Endothelial cell of umbilical vein (primary cell): ENCODE measurements at regions of chr6 and their contacts with region 1.

Region 1: DNA sequence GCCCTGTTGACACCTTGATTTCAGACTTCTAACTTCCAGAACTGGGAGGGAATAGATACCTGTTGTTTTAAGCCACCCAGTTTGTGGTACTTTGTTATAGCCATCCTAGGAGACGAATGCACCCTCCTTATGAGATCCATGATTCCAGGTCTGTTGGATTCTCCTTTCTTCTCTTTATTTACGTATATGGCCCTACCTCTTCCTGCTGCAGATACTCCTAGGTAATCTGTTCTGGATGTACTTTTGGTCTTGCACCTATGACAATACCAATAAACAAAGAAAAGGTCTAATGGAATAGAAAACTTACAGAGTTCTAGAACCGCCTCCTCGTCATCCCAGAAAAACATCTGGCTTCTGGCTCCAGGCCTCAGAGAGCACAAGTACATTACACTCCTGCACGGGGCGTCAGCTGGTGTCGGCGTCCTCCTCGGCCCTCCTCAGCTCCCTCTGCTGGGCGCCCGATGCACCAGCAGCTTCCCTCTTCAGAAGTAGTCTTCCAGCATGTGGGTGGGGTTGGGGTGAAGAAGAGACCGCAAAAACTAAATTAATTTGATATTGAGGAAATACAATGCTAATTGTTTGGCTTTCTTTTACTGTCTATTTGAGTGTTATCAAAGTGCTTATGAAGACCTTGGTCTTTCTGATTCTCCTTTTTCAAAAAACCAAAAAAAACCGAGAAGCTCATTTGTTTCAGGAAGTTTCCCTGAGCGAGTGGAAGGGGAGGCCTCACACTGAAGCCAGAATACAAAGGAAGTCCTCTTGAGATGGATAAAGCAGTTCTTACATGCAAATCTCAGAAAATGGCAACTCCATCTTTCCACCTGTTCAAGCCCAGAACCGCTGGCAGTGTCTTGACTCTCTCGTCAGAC is 9.7 kb upstream of the ATXN1 start:
- DNase-seq: peak; percentile 76
- H3K4me3 ChIP-seq: no peak overlapping the region
- H3K27ac ChIP-seq: peak overlapping the region; percentile 84
- H3K4me1 ChIP-seq: peaks cover 39% of the 10 kb centered on the region
- H3K27me3 ChIP-seq: no peaks in the 10 kb centered on the region
- CTCF ChIP-seq: peak; percentile 93 to 94
- POLR2A ChIP-seq: no peak

Region 2: GRCh38 chr6:16216501-16217155 is 554.3 kb before region 1 on chr6:
- CTCF ChIA-PET with region 1: no interaction called
- POLR2A ChIA-PET with region 1: no interaction called
- dilution Hi-C with region 1: no loop called
- intact Hi-C with region 1: loop called (anchors 5 kb)
- DNase-seq: peak; percentile 41
- H3K4me3 ChIP-seq: no peak overlapping the region
- H3K27ac ChIP-seq: peak overlapping the region; percentile 99
- H3K4me1 ChIP-seq: peaks cover 28% of the 10 kb centered on the region
- H3K27me3 ChIP-seq: no peaks in the 10 kb centered on the region
- CTCF ChIP-seq: no peak
- POLR2A ChIP-seq: no peak

Region 3: DNA sequence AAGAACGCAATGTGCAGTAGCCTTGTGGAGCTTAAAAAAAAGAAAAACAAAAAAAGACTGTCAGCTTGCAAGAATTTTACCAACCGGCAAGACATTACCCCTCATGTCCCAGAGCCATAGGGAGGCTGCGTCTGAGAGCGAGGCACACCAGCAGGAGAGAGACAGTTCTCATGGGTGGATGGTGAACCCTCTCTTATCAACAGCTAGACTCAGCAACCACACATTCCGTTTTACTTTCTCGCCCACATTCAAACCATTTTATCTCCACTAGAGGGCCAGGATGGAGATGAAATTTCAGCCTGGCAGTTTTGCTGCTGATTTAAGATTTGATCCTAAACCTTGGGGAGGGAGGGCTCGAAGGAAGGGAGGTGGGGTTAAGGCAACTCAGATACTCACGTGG is 256.7 kb before region 1 on chr6:
- CTCF ChIA-PET with region 1: interaction called, 93 read pairs
- POLR2A ChIA-PET with region 1: no interaction called
- dilution Hi-C with region 1: no loop called
- intact Hi-C with region 1: loop called (anchors 1 kb)
- DNase-seq: peak; percentile 60
- H3K4me3 ChIP-seq: no peak overlapping the region
- H3K27ac ChIP-seq: no peak overlapping the region
- H3K4me1 ChIP-seq: peaks cover 6% of the 10 kb centered on the region
- H3K27me3 ChIP-seq: no peaks in the 10 kb centered on the region
- CTCF ChIP-seq: peak; percentile 36 to 55
- POLR2A ChIP-seq: no peak

Region 4: DNA sequence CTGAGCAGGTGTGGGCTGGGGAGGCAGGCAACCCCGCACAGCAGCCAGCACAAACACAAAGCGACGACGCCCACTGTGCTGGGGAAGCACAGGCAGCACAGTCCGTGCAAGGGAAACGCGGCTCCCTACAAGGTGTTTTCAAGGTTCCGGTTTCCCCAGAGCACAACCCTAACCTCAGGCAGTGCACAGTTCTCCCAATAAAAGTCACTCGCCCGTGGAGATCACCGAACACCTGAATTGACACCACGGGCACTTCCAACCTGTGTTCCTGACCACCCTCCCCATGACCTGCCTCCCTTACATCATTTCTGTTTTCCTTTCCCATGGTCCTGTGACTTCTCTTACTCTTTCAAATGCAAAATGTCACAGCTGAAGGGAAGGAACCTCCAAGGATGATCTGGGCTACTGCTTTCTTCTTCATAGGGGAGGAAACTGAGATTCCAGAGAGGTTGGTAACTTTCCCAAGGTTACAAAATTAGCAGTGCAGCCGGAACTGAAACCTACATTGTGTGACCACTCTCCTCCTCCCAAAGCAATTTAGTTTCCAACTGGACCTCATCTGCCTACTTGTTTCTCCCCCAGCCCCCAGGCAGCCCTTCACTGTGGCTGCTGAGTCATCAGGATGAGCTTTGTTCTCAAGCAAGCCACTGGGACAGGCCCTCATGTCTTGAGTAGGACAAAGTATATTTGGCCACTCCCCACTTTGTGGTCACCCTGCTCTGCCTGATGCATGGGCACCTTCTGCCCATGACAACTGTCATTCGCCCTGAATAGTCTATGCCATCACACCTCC is 134.9 kb before region 1 on chr6:
- CTCF ChIA-PET with region 1: no interaction called
- POLR2A ChIA-PET with region 1: no interaction called
- dilution Hi-C with region 1: no loop called
- intact Hi-C with region 1: no loop called
- DNase-seq: no peak
- H3K4me3 ChIP-seq: no peak overlapping the region
- H3K27ac ChIP-seq: no peak overlapping the region
- H3K4me1 ChIP-seq: peaks cover 9% of the 10 kb centered on the region
- H3K27me3 ChIP-seq: no peaks in the 10 kb centered on the region
- CTCF ChIP-seq: no peak
- POLR2A ChIP-seq: no peak

Region 5: GRCh38 chr6:16964553-16965501 is 193.9 kb after region 1 on chr6:
- CTCF ChIA-PET with region 1: interaction called, 22 read pairs
- POLR2A ChIA-PET with region 1: no interaction called
- dilution Hi-C with region 1: no loop called
- intact Hi-C with region 1: no loop called
- DNase-seq: peak; percentile 66
- H3K4me3 ChIP-seq: no peak overlapping the region
- H3K27ac ChIP-seq: no peak overlapping the region
- H3K4me1 ChIP-seq: peaks cover 11% of the 10 kb centered on the region
- H3K27me3 ChIP-seq: peaks cover 0 to 2% of the 10 kb centered on the region in 2 experiments
- CTCF ChIP-seq: peak; percentile 94 to 97
- POLR2A ChIP-seq: no peak

Region 6: DNA sequence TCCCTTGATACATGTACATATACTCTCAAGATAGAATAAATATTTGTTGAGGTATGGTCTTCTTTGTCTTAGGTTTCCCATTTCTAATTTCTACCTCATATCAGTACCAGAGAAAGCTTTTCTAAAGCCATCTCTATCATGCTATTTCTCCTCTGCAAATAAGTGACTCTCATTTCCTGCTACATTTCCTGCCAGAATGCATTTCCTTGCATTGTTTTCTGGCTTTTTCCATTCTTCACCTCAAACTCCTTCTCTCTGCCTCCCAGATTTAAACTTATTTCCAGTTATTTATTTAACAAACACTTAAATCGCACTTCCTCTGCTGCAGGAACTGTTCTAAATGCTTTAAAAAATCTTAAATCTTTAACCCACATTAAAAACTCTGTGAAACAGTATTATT is 256.5 kb after region 1 on chr6:
- CTCF ChIA-PET with region 1: interaction called, 6 read pairs
- POLR2A ChIA-PET with region 1: no interaction called
- dilution Hi-C with region 1: no loop called
- intact Hi-C with region 1: loop called (anchors 5 kb)
- DNase-seq: peak; percentile 66
- H3K4me3 ChIP-seq: peak overlapping the region in 1 of 3 experiments; percentile 11
- H3K27ac ChIP-seq: peak overlapping the region; percentile 53
- H3K4me1 ChIP-seq: peaks cover 19% of the 10 kb centered on the region
- H3K27me3 ChIP-seq: no peaks in the 10 kb centered on the region
- CTCF ChIP-seq: no peak
- POLR2A ChIP-seq: no peak

Region 7: DNA sequence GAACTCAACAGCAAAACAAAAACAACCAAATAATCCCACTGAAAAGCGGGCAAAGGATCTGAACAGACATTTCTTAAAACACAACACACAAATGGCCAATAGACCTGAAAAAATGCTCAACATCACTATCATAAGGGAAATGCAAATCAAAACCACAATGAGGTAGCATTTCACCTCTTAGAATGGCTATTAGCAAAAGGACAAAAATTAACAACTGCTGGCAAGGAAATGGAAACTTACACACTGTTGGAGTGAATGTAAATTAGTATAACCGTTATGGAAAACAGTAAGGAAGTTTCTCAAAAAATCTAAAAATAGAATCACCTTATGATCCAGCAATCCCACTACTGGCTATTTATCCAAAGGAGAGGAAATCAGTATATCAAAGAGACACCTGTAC is 850.1 kb after region 1 on chr6:
- CTCF ChIA-PET with region 1: no interaction called
- POLR2A ChIA-PET with region 1: no interaction called
- dilution Hi-C with region 1: no loop called
- intact Hi-C with region 1: no loop called
- DNase-seq: no peak
- H3K4me3 ChIP-seq: no peak overlapping the region
- H3K27ac ChIP-seq: no peak overlapping the region
- H3K4me1 ChIP-seq: no peaks in the 10 kb centered on the region
- H3K27me3 ChIP-seq: no peaks in the 10 kb centered on the region
- CTCF ChIP-seq: no peak
- POLR2A ChIP-seq: no peak